ENCODE measurements at regions of chr22 and their contacts with region 1.

Region 1: DNA sequence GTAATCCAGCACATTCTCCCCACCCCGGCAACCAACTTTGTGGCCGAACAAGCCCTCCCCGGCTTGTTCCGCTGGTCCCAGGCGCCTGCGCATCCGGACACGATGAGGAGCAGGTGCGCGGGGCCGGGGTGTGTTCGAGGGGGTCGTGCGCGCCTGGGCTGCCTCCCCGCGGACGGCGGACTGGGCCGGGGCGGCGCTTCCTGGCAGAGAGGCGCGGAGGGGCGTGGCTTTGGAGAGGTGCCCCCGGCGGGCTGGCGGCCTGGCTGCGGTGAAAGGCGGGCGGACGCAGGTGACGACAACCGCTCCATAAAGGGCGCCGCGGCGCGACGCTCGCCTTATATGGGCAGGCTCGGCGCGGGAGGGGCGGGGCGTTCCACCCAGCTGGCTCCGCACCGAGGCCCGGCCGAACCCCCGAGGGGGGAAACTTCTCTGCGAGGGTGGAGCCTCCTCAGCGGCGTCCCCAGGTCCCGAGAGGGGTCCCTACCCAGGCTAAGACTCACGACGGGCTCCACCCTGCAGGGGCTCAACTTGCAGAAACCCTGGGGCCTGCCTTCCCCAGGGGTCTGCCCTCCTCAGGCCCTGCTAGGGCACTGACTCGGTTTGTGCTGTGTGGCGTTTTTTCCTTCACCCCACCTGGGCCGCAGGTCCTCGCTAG is 26.4 kb downstream of the TXN2 start:
- DNase-seq: peak; percentile 95
- H3K4me3 ChIP-seq: peak overlapping the region; percentile 35 to 45
- H3K27ac ChIP-seq: peak overlapping the region; percentile 96 to 98
- H3K4me1 ChIP-seq: peaks cover 20% of the 10 kb centered on the region
- H3K27me3 ChIP-seq: no peaks in the 10 kb centered on the region
- CTCF ChIP-seq: peak in 2 of 4 experiments; percentile 54 to 77
- POLR2A ChIP-seq: peak; percentile 92

Region 2: DNA sequence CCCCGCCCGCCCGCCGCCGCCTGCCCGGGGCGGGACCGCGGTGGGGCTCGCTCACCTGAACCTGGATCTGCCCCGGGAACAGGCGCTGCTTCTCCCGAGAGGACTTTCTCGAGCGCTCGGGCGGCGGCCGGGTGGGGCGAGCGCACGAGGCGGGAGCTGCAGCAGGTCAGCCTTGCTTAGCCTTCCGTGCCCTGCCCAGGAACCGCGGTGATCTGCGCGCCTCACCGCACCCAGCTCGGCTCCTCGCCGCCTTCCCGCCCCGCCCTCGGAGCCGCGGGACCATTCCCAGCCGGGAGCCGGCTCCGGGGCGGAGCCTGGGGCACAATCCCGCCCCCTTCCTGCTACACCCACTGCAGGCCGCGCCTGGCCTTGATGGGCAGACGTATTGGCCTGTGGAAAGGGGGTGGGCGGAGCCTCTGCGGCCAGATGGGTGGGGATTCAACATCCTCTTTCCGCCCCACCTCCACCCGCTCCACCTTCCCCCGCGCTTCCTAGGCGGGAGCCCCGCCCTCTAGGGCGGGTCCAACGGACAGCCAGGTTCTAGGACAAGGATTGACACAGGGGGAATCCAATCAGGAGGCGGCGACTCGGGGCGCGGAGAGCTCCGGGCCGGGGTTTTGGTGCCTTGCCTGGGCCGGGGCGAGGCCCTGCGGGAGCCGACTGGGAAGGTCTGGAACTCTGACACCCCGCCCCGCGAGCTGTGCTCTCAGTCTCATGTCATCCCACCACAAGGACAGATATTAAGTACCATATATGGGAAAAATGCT is 67.1 kb before region 1 on chr22 and contains the start of gene MYH9:
- intact Hi-C with region 1: loop called (anchors 2 kb)
- DNase-seq: peak; percentile 100
- H3K4me3 ChIP-seq: peak within 1 kb of the TSS; percentile 99
- H3K27ac ChIP-seq: peak within 1 kb of the TSS; percentile 99 to 100
- H3K4me1 ChIP-seq: peaks cover 13% of the 10 kb centered on the region
- H3K27me3 ChIP-seq: no peaks in the 10 kb centered on the region
- CTCF ChIP-seq: peak in 1 of 4 experiments; percentile 35
- POLR2A ChIP-seq: peak; percentile 100
- total RNA-seq, gene MYH9: 295 to 329 TPM

Region 3: GRCh38 chr22:36528341-36528740 is 73.3 kb after region 1 on chr22:
- intact Hi-C with region 1: no loop called
- DNase-seq: no peak
- H3K4me3 ChIP-seq: peak overlapping the region; percentile 46 to 59
- H3K27ac ChIP-seq: peak overlapping the region; percentile 89 to 90
- H3K4me1 ChIP-seq: no peaks in the 10 kb centered on the region
- H3K27me3 ChIP-seq: no peaks in the 10 kb centered on the region
- CTCF ChIP-seq: no peak
- POLR2A ChIP-seq: no peak

Region 4: DNA sequence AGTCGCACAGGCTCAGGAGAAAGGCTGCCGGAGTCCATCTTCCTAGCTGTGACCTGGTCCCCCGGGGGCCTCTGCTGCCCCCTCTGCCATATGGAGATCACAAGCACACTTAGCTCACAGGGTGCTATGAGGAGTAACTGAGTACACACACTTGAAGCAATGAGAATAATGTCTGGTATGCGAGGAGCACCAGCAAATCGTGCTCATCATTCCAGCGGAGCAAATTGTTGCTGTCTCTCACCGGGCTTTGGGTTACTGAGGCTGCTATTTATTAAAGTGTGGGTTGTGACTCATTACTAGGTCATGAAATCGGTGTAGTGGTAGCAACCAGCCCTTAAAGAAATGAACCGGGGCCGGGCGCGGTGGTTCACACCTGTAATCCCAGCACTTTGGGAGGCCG is 122.0 kb after region 1 on chr22:
- intact Hi-C with region 1: no loop called
- DNase-seq: no peak
- H3K4me3 ChIP-seq: no peak overlapping the region
- H3K27ac ChIP-seq: no peak overlapping the region
- H3K4me1 ChIP-seq: no peaks in the 10 kb centered on the region
- H3K27me3 ChIP-seq: no peaks in the 10 kb centered on the region
- CTCF ChIP-seq: no peak
- POLR2A ChIP-seq: no peak